ENCODE measurements at regions of chr5 and their contacts with region 1.

Region 1: GRCh38 chr5:147453875-147454814 is 55.7 kb downstream of the DPYSL3 start:
- DNase-seq: peak; percentile 96
- H3K4me3 ChIP-seq: peak overlapping the region; percentile 85 to 87
- H3K27ac ChIP-seq: peak overlapping the region; percentile 90 to 91
- H3K4me1 ChIP-seq: peaks cover 20 to 29% of the 10 kb centered on the region in 2 experiments
- H3K27me3 ChIP-seq: no peaks in the 10 kb centered on the region
- CTCF ChIP-seq: peak; percentile 97
- EP300 ChIP-seq: no peak; a peak in 1 of 4 replicates
- RAD21 ChIP-seq: peak; percentile 82

Region 2: GRCh38 chr5:147434049-147434448 is 20.1 kb before region 1 on chr5:
- CTCF ChIA-PET with region 1: interaction called, 10 read pairs
- POLR2A ChIA-PET with region 1: no interaction called
- DNase-seq: no peak
- H3K4me3 ChIP-seq: no peak overlapping the region
- H3K27ac ChIP-seq: no peak overlapping the region
- H3K4me1 ChIP-seq: peaks cover 0 to 31% of the 10 kb centered on the region in 2 experiments; a peak in 3 of 4 replicates
- H3K27me3 ChIP-seq: no peaks in the 10 kb centered on the region
- CTCF ChIP-seq: no peak
- EP300 ChIP-seq: no peak
- RAD21 ChIP-seq: no peak

Region 3: DNA sequence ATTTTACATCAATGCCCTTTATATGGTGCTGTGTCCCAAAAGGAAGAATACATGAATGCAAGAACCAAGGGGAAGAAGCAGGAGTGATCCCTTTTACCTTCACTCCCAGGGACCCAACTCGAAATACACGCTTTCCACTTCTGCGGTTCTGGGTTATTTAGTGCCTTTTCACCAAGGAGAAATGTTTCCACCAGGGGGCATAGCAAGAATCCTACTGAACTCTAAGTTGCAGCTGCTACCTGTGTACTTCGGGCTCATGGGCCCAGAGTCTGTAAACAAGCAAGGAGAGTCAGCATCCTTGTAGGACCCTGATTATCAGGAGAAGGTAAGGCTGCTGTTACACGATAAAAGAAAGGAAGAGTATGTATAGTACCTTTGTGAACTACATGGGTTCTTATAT is 10.1 kb after region 1 on chr5:
- CTCF ChIA-PET with region 1: interaction called, 26 read pairs
- POLR2A ChIA-PET with region 1: no interaction called
- DNase-seq: no peak
- H3K4me3 ChIP-seq: no peak overlapping the region
- H3K27ac ChIP-seq: no peak overlapping the region
- H3K4me1 ChIP-seq: peaks cover 0 to 12% of the 10 kb centered on the region in 2 experiments; a peak in 3 of 4 replicates
- H3K27me3 ChIP-seq: no peaks in the 10 kb centered on the region
- CTCF ChIP-seq: peak; percentile 60
- EP300 ChIP-seq: no peak
- RAD21 ChIP-seq: peak; percentile 69

Region 4: DNA sequence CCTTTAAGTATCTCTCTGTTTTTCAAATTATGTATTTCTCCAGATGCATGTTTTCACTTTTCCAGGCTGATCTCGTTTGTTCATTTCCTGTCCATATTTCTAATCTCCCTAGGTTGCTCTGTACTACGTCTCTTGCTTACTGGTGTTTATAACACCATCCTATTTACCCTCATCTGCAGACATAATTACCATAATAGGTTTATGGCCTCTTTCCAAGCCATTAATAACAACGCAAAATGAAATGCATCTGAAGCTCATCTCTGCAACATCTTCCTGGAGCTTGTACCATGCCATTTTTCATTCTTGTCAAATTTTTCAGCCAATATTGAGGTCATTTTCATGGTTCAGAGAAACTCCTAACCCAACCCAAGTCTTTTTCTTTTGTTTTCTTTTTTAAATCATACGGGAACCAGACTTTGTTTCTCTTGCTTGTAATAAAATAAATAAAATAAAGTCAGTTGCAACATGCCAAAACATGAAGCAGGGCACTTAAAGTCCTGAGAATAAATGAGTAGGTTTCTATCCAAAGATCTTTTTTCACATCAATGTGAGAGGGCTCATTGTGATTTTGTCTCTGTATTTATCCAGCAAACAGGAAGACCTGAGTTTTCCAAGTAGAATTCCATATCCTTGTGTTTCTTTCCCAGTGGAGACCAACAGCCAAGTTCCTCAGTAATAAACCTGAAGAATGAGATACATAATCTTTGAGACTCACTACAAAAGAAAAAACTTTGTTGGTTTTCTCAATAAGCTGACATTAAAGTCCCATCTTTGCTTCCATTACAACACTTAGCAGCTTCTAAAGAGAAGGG is 18.7 kb after region 1 on chr5:
- CTCF ChIA-PET with region 1: interaction called, 16 read pairs
- POLR2A ChIA-PET with region 1: no interaction called
- DNase-seq: peak; percentile 74
- H3K4me3 ChIP-seq: no peak overlapping the region
- H3K27ac ChIP-seq: peak overlapping the region; percentile 26 to 92; a peak in 3 of 4 replicates
- H3K4me1 ChIP-seq: peaks cover 24 to 38% of the 10 kb centered on the region in 2 experiments; a peak in 3 of 4 replicates
- H3K27me3 ChIP-seq: no peaks in the 10 kb centered on the region
- CTCF ChIP-seq: no peak
- EP300 ChIP-seq: peak; percentile 35 to 99; a peak in 2 of 4 replicates
- RAD21 ChIP-seq: 0 out of 2 replicates have a peak, but pooled peaks have one; percentile 17

Region 5: GRCh38 chr5:147509710-147510651 is 55.8 kb after region 1 on chr5 and contains the start of gene DPYSL3:
- CTCF ChIA-PET with region 1: interaction called, 10 read pairs
- POLR2A ChIA-PET with region 1: no interaction called
- DNase-seq: peak; percentile 84
- H3K4me3 ChIP-seq: peak within 1 kb of the TSS; percentile 82 to 92
- H3K27ac ChIP-seq: peak within 1 kb of the TSS; percentile 82 to 86
- H3K4me1 ChIP-seq: peaks cover 0 to 7% of the 10 kb centered on the region in 2 experiments; a peak in 2 of 4 replicates
- H3K27me3 ChIP-seq: no peaks in the 10 kb centered on the region
- CTCF ChIP-seq: peak; percentile 44
- EP300 ChIP-seq: peak in 1 of 2 experiments; percentile 13; a peak in 1 of 4 replicates
- RAD21 ChIP-seq: peak; percentile 39; the same call in 1 of the 2 replicates
- polyA plus RNA-seq, gene DPYSL3: 123 and 150 TPM in 2 replicates

Region 6: GRCh38 chr5:147558826-147559225 is 104.7 kb after region 1 on chr5:
- CTCF ChIA-PET with region 1: interaction called, 68 read pairs
- POLR2A ChIA-PET with region 1: no interaction called
- DNase-seq: peak; percentile 66
- H3K4me3 ChIP-seq: no peak overlapping the region
- H3K27ac ChIP-seq: no peak overlapping the region
- H3K4me1 ChIP-seq: peaks cover 5 to 13% of the 10 kb centered on the region in 2 experiments; a peak in 2 of 4 replicates
- H3K27me3 ChIP-seq: no peaks in the 10 kb centered on the region
- CTCF ChIP-seq: peak; percentile 88
- EP300 ChIP-seq: no peak
- RAD21 ChIP-seq: peak; percentile 94

Measured in SK-N-SH (cell line).